SK-N-SH (cell line): ENCODE measurements at regions of chr1 and their contacts with region 1.

Region 1: GRCh38 chr1:67853704-67854103 is 20.4 kb upstream of the GNG12 start:
- DNase-seq: peak; percentile 77
- H3K4me3 ChIP-seq: peak overlapping the region in 1 of 2 experiments; percentile 2; a peak in 1 of 4 replicates
- H3K27ac ChIP-seq: peak overlapping the region in 1 of 2 experiments; percentile 43; a peak in 2 of 4 replicates
- H3K4me1 ChIP-seq: peaks cover 4 to 10% of the 10 kb centered on the region in 2 experiments
- H3K27me3 ChIP-seq: no peaks in the 10 kb centered on the region
- CTCF ChIP-seq: peak; percentile 97
- EP300 ChIP-seq: no peak
- RAD21 ChIP-seq: peak; percentile 99

Region 2: DNA sequence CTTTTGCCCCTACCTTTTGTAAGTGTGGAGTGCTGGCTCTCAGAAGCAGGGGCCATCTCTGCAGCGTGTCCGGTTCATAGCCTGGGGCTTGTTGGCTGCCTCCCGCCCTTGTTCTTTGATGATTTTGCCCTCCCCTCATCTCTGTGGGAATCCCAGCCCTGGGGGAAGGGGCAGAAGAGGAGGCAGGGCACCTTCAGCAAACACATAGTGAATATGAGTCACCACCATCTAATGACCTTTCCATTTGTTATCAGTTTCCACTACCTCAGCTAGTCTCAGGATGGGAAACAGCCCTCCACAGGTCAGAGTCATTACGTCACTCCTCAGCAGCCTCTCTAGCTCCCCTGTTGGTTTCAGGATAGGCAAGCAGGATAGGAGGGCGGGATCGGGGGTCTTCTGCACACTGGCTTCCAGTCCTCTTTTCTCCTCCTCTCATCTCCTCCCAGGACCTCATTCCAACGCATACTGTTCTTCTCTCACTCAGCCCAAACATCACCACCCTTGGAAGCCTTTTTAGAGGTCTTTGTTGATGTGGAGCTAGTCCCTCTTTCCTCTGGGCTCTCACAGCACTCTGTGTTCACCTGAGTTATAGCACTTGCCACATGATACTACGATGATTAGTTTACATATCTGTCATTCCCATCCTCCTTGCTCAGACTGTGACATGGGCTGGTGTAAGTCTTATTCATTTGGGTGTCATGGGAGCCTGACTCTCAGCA is 152.9 kb before region 1 on chr1:
- CTCF ChIA-PET with region 1: no interaction called
- POLR2A ChIA-PET with region 1: no interaction called
- DNase-seq: peak; percentile 54
- H3K4me3 ChIP-seq: no peak overlapping the region
- H3K27ac ChIP-seq: no peak overlapping the region
- H3K4me1 ChIP-seq: peaks cover 0 to 5% of the 10 kb centered on the region in 2 experiments; a peak in 1 of 4 replicates
- H3K27me3 ChIP-seq: no peaks in the 10 kb centered on the region
- CTCF ChIP-seq: peak; percentile 30
- EP300 ChIP-seq: no peak
- RAD21 ChIP-seq: no peak

Region 3: DNA sequence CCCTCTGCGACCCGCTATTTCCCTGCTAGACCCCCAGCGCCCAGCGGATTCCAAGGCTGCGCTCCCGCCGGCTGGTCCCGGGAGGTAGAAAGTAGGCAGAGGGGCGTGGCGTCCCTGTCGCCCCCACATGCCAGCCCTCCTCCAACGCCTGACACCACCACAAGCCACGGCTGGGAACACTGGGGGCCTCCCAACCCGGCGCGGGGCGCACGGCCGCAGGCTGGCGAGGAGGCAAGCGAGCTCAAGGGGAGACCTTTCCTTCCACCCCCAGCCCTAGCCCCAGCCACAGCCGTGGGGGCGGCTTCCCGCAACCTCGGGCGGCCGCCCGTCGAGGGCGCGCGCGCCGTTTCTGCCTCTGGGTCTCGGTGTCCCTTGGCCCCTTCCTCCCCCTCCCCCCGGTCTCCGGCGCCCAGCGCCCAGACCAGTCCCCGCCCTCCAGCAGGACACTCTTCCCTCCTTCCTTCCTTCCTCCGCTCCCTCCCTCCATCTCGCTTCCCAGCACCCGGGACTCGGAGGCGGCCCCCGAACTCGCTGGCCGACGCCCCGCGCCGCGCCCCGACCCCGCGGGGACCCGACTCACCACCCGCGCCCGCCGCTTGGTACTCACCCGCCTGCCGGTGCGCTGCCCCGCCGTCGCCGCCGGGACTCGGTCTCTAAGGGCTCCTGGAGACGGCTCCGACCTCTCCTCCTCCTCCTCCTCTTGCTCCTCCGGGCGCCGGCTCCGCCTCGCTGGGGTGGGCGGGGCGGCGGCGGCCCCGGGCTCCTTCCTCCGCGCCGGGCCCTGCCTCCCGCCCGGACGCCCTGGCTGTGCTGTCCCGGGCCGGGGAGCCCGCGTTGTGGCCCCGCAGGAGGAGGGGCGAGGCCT is 20.7 kb before region 1 on chr1 and contains the start of gene GNG12:
- CTCF ChIA-PET with region 1: interaction called, 26 read pairs
- POLR2A ChIA-PET with region 1: no interaction called
- DNase-seq: peak; percentile 90
- H3K4me3 ChIP-seq: peak within 1 kb of the TSS; percentile 77 to 91
- H3K27ac ChIP-seq: peak within 1 kb of the TSS; percentile 84 to 87
- H3K4me1 ChIP-seq: peaks cover 0 to 27% of the 10 kb centered on the region in 2 experiments; a peak in 3 of 4 replicates
- H3K27me3 ChIP-seq: no peaks in the 10 kb centered on the region
- CTCF ChIP-seq: no peak
- EP300 ChIP-seq: no peak
- RAD21 ChIP-seq: no peak
- polyA plus RNA-seq, gene GNG12: 41.2 and 56.1 TPM in 2 replicates

Region 4: DNA sequence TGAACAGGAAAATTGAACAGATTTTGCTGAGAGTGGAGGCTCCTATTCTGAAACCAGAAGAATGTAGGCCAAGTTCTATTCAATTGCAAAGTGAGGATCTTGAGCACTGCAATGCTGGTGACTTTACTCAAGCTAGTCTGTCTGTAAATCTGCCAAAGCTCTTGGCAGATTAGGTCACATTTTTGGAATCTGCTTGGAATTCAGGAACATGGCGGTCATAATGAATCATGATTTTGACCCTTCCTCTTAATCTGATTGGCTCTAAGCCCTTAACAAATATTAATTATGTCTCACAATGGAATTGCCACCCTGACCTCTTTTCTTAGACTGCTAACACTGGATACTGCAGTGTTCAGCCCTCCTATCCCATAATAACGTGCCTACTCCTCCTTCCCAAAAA is 13.3 kb before region 1 on chr1:
- CTCF ChIA-PET with region 1: interaction called, 26 read pairs
- POLR2A ChIA-PET with region 1: no interaction called
- DNase-seq: no peak
- H3K4me3 ChIP-seq: no peak overlapping the region
- H3K27ac ChIP-seq: peak overlapping the region in 1 of 2 experiments; percentile 72; a peak in 2 of 4 replicates
- H3K4me1 ChIP-seq: peaks cover 7 to 48% of the 10 kb centered on the region in 2 experiments
- H3K27me3 ChIP-seq: no peaks in the 10 kb centered on the region
- CTCF ChIP-seq: no peak
- EP300 ChIP-seq: peak in 1 of 2 experiments; percentile 88; a peak in 2 of 4 replicates
- RAD21 ChIP-seq: no peak

Region 5: GRCh38 chr1:68010090-68010489 is 156.4 kb after region 1 on chr1:
- CTCF ChIA-PET with region 1: interaction called, 32 read pairs
- POLR2A ChIA-PET with region 1: no interaction called
- DNase-seq: peak; percentile 11
- H3K4me3 ChIP-seq: no peak overlapping the region
- H3K27ac ChIP-seq: no peak overlapping the region
- H3K4me1 ChIP-seq: peaks cover 0 to 11% of the 10 kb centered on the region in 2 experiments; a peak in 1 of 4 replicates
- H3K27me3 ChIP-seq: no peaks in the 10 kb centered on the region
- CTCF ChIP-seq: peak; percentile 51
- EP300 ChIP-seq: no peak
- RAD21 ChIP-seq: peak; percentile 72

Region 6: GRCh38 chr1:68051475-68051874 is 197.8 kb after region 1 on chr1:
- CTCF ChIA-PET with region 1: interaction called, 21 read pairs
- POLR2A ChIA-PET with region 1: no interaction called
- DNase-seq: peak; percentile 78
- H3K4me3 ChIP-seq: peak overlapping the region; percentile 43 to 68
- H3K27ac ChIP-seq: peak overlapping the region in 1 of 2 experiments; percentile 36; a peak in 1 of 4 replicates
- H3K4me1 ChIP-seq: no peaks in the 10 kb centered on the region; a peak in 1 of 4 replicates
- H3K27me3 ChIP-seq: no peaks in the 10 kb centered on the region
- CTCF ChIP-seq: peak; percentile 58
- EP300 ChIP-seq: no peak
- RAD21 ChIP-seq: peak; percentile 77

Region 7: GRCh38 chr1:68103884-68104554 is 250.3 kb after region 1 on chr1:
- CTCF ChIA-PET with region 1: interaction called, 12 read pairs
- POLR2A ChIA-PET with region 1: no interaction called
- DNase-seq: no peak
- H3K4me3 ChIP-seq: no peak overlapping the region
- H3K27ac ChIP-seq: peak overlapping the region in 1 of 2 experiments; percentile 81; a peak in 2 of 4 replicates
- H3K4me1 ChIP-seq: peaks cover 0 to 11% of the 10 kb centered on the region in 2 experiments; a peak in 2 of 4 replicates
- H3K27me3 ChIP-seq: no peaks in the 10 kb centered on the region
- CTCF ChIP-seq: no peak
- EP300 ChIP-seq: peak in 1 of 2 experiments; percentile 16; a peak in 1 of 4 replicates
- RAD21 ChIP-seq: no peak

Region 8: DNA sequence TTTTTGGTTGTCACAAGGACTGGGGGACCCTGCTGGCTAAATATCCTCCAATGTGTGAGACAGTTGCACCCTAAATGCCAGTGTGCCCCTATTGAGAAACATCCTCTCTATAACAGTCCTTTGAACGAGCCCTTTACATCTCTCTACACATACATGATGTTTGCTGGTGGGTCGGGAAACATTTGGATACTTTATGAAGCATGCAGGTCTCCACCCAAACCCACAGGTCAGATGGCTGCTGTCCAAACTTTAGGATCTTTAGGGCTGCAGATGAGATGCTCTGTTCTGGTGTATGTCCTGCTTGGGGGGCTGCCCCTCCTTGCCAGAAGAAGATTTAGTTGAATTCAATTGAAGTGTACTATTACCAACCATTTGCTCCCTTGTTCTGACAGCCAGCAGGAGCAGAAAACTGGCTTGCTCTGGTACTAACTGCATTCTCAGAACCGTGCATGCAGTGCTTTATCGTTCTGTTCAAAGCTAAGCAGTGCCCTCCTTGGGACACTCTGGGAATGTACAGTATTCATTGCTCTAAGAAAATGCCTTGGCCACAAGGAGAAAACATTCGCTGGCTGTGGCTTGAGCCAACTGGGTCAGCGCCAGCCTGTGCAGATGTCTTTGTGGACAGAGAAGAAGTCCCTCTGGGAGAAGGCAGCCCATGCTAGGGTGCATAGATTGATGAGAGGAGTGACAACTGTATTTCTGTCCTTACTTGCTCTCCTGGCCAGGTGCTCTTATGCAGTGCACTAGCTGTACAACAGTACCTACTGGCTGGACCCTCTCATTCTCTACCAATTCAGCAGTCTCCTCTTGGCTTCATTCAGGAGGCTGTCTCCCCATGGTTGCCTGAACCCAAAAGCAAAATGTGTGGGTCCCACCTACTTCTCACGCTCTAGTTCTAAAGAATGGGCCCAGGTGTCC is 258.1 kb after region 1 on chr1:
- CTCF ChIA-PET with region 1: interaction called, 28 read pairs
- POLR2A ChIA-PET with region 1: no interaction called
- DNase-seq: peak; percentile 44
- H3K4me3 ChIP-seq: no peak overlapping the region
- H3K27ac ChIP-seq: peak overlapping the region in 1 of 2 experiments; percentile 75; a peak in 2 of 4 replicates
- H3K4me1 ChIP-seq: peaks cover 3 to 19% of the 10 kb centered on the region in 2 experiments; a peak in 2 of 4 replicates
- H3K27me3 ChIP-seq: no peaks in the 10 kb centered on the region
- CTCF ChIP-seq: peak; percentile 77
- EP300 ChIP-seq: no peak
- RAD21 ChIP-seq: peak; percentile 84